ENCODE measurements at regions of chr16 and their contacts with region 1.

Region 1: GRCh38 chr16:19886073-19886941 is 1.7 kb upstream of the GPRC5B start:
- DNase-seq: peak; percentile 77
- ATAC-seq: peak; percentile 33 to 56

Region 2: DNA sequence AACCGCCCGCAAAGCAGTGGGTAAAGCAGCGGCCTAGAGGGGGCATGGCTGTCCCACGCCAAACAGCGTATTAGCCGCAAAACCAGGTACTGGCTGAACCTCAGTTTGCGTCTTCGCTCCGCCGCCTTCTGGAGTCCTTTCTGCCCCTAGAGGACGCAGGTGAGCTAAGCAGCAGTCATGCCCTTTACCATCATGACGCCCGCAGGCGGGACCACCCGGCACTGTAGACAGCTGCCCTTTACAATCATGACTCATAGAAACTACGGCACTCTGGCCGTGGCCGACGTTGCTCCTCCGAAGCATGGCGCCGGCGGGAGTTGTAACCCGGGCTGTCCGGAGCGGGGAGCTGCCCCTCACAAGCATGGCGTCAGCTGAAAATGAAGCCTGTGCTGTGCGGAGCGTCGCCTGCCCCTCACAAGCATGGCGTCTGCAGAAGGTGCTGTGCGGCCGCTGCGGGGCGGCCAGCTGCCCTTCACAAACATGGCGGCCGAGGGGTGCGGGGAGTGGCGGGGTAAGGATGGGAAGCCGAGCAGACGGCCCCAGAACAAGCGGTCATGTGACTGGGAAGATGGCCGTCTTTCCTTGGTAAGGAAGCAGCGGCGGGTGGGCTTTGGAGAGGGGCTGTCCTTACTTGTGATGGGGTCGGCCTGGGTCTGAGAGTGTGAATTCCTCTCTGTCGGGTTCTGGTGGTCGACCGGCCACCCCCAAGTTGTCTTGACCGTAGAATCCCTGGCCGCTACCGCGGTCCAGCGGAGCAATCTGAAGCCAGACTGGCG is 331.0 kb before region 1 on chr16 and contains the start of gene VPS35L:
- intact Hi-C with region 1: loop called (anchors 2 to 5 kb)
- DNase-seq: peak; percentile 99
- ATAC-seq: peak; percentile 99 to 100
- total RNA-seq, gene VPS35L: 31.3 to 34.3 TPM

Region 3: DNA sequence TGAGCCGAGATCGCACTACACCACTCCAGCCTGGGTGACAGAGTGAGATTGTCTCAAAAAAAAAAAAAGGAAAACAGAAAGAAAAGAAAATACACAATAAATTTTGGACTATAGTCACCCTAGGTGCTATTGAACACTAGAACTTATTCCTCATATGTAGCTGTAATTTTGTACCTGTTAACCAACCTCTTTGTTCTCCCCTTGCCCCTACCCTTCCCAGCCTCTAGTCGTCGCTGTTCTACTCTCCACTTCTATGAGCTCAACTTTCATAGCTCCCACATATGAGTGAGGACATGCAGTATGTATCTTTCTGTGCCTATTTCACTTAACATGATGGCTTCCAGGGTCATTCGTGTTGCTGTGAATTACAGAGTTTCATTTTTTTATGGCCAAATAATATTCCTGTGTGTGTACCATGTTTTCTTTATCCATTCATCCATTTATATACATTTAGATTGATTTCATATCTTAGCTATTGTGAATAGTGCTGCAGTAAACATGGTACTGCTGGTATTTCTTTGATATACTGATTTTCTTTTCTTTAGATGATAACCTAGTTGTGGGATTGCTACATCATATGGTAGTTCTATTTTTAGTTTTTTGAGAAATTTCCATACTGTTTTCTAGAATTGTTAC is 302.5 kb before region 1 on chr16:
- intact Hi-C with region 1: loop called in 1 of 2 experiments (anchors 5 kb)
- DNase-seq: no peak
- ATAC-seq: peak in 1 of 2 donors; percentile 71

Region 4: GRCh38 chr16:19601083-19601976 is 285.0 kb before region 1 on chr16:
- intact Hi-C with region 1: loop called (anchors 1 to 2 kb)
- DNase-seq: no peak
- ATAC-seq: no peak

Region 5: DNA sequence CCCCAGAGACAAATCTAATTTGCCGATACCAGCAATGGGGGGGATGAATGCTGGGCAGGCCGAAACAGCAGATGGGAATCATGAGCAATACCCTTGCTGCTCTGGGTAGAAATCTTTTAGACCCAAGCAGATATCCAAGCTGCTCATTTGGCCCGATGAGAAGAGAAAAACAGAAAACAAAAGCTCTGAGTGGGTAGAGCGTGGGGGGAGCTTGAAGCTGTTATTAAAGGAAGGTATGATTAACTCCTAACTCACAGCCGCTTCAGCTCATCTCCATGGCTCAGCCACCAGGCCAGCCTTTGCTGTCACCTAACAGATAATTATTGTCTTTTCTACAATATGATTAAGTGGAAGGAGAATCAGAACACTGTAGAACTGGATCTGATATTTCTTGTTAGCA is 272.5 kb before region 1 on chr16:
- intact Hi-C with region 1: no loop called
- DNase-seq: no peak
- ATAC-seq: no peak

Region 6: DNA sequence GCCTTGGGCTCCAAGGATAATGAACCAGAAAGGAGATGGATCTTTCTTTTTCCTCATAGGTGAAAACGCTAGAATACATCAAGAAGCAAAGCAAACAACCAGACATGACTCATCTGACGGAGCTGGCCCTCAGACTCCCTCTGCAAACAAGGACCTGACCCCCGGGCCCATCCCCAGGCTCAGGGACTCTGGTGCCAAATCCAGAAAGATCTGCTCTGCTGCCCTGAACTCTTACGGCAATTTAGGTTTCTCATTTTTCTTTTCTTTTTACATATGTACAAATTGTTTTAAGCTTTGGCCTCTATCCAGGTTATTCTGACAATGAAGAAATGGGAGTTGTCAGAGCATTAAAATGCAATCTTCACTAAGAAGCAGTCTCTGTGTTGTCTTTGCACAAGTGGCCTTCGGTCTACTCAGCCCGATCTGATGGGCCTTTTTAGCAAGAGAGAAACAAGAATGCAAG is 186.0 kb before region 1 on chr16:
- intact Hi-C with region 1: loop called in 1 of 2 experiments (anchors 5 kb)
- DNase-seq: no peak
- ATAC-seq: peak in 1 of 2 donors; percentile 15

Region 7: DNA sequence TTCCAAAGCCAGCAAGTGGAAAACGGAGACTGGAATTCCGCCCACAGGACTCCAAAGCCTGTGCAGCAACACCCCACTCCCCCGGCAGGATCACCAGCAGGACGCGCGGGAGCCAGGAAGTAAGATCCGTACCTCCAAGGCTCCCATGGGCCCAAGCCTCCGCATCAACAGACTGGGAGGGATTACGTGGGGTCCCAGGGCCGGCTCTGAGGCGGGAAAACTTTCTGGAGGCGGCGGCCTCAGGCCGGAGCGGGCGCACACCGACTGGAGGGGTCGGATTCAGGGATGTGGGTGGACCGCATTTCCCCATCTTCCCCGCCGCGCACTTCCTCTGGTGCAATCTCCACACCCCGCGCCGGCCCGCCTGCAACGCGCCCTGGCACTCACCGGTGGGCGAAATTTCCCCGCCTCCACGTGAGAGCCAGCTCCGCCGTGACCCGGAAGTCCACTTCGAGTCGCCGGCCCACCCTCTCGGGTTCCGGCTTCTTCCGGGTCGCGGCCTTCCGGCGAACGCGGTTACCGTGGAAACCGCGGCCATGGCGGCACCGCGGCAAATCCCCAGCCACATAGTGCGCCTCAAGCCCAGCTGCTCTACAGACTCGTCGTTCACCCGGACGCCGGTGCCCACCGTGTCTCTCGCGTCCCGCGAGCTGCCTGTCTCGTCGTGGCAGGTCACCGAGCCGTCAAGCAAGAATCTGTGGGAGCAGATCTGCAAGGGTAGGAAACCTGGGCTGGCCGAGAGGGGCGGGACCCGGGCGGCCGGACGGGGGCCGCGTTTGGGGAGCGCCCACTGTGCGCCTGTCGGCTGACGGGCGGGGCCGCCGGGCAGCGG is 168.3 kb before region 1 on chr16 and contains the starts of genes IQCK and KNOP1:
- intact Hi-C with region 1: loop called (anchors 2 to 10 kb)
- DNase-seq: peak; percentile 95
- ATAC-seq: peak; percentile 98
- total RNA-seq, gene IQCK: 4.3 to 6.6 TPM
- total RNA-seq, gene KNOP1: 8.5 to 9.1 TPM

Measured in left cardiac atrium (tissue), 4 donors.